Activated CD4-positive, alpha-beta T cell treated with anti-CD3 and anti-CD28 coated beads, Interleukin-2, amount 10 ng/mL, durations not matched to agents 24 days and 14 days (primary cell): ENCODE measurements at regions of chr2 and their contacts with region 1.

Region 1: GRCh38 chr2:130355578-130356431 is at the start of gene PTPN18:
- DNase-seq: peak; percentile 91
- H3K4me3 Mint-ChIP-seq: peak within 1 kb of the TSS; percentile 86
- H3K27ac Mint-ChIP-seq: peak within 1 kb of the TSS; percentile 15
- H3K4me1 Mint-ChIP-seq: peaks cover 12% of the 10 kb centered on the region
- H3K27me3 Mint-ChIP-seq: no peaks in the 10 kb centered on the region
- total RNA-seq, gene PTPN18: 61.7 and 61.9 TPM in 2 replicates

Region 2: GRCh38 chr2:130198343-130198742 is 157.5 kb before region 1 on chr2 and contains the start of gene TUBA3E:
- intact Hi-C with region 1: no loop called
- DNase-seq: no peak
- H3K4me3 Mint-ChIP-seq: no peak within 1 kb of the TSS
- H3K27ac Mint-ChIP-seq: no peak within 1 kb of the TSS
- H3K4me1 Mint-ChIP-seq: no peaks in the 10 kb centered on the region
- H3K27me3 Mint-ChIP-seq: no peaks in the 10 kb centered on the region
- total RNA-seq, gene TUBA3E: not detected in 2 replicates

Region 3: GRCh38 chr2:130391058-130391871 is 35.5 kb after region 1 on chr2:
- intact Hi-C with region 1: loop called (anchors 5 kb)
- DNase-seq: peak; percentile 92
- H3K4me3 Mint-ChIP-seq: peak overlapping the region; percentile 90
- H3K27ac Mint-ChIP-seq: peak overlapping the region; percentile 88
- H3K4me1 Mint-ChIP-seq: peaks cover 11% of the 10 kb centered on the region
- H3K27me3 Mint-ChIP-seq: peaks cover 3% of the 10 kb centered on the region